CD14-positive monocyte (primary cell): ENCODE measurements at regions of chr2 and their contacts with region 1.

Region 1: DNA sequence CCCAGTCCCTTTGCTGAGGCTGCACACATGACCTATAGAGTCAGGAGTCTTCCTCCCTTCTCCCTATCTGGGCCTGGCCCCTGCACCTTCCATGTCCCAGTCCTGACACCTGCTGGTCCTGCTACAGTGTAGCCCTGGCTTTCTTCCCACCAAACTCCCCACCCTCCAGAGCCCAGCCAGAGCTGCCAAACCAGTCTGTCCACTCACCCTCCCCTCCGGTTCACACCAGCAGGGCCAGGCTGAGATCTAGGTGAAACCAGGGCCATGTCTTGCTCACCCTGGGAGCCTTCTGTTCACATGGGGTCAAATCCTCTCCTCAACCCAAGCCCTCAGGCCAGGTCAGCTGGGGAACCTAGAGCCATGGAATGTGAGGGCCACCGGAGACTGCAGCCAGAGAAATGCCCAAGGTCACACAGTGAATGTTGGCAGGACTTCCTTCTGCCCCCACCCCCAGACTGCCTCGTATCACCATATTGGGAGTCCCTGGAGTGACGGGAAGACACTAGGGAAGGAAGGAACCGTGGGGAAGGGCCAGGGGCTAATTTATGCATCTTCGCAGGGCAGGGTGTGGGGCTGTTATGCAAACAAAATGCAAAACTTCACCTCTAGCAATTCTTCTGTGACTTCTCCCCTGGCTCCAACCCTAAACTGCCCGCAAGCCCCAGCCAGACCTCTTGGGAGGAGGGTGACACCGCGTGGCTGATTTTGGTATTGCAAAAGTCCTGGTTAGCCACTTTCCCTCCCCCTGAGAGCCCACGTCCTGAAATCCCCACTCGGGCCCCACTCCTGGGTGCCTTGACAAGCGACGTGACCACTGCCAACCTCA is 14.6 kb downstream of the TNS1 start:
- DNase-seq: peak; percentile 65 to 80 (median 78)
- H3K4me3 ChIP-seq: no peak overlapping the region
- H3K4me3 Mint-ChIP-seq: no peak overlapping the region
- H3K27ac ChIP-seq: no peak overlapping the region
- H3K27ac Mint-ChIP-seq: peak overlapping the region in 1 of 7 donors; percentile 68
- H3K4me1 ChIP-seq: peaks cover under 1 to 1% of the 10 kb centered on the region in 2 donors
- H3K4me1 Mint-ChIP-seq: peaks cover 3% of the 10 kb centered on the region
- H3K27me3 ChIP-seq: no peaks in the 10 kb centered on the region
- H3K27me3 Mint-ChIP-seq: peaks cover 0 to 2% (median 0%) of the 10 kb centered on the region in 3 donors
- CTCF ChIP-seq: peak; percentile 93

Region 2: GRCh38 chr2:217886720-217887309 is 101.4 kb before region 1 on chr2:
- intact Hi-C with region 1: loop called (anchors 5 to 10 kb)
- DNase-seq: peak; percentile 49 to 66 (median 53)
- H3K4me3 ChIP-seq: peak overlapping the region in 1 of 3 experiments; percentile 3
- H3K4me3 Mint-ChIP-seq: no peak overlapping the region
- H3K27ac ChIP-seq: peak overlapping the region in 1 of 2 donors; percentile 34
- H3K27ac Mint-ChIP-seq: peak overlapping the region in 6 of 7 donors; percentile 42 to 85 (median 70)
- H3K4me1 ChIP-seq: peaks cover 18 to 22% of the 10 kb centered on the region in 2 donors
- H3K4me1 Mint-ChIP-seq: peaks cover 23% of the 10 kb centered on the region
- H3K27me3 ChIP-seq: no peaks in the 10 kb centered on the region
- H3K27me3 Mint-ChIP-seq: peaks cover 1 to 7% (median 2%) of the 10 kb centered on the region in 3 donors
- CTCF ChIP-seq: peak; percentile 78

Region 3: GRCh38 chr2:217899231-217900009 is 88.8 kb before region 1 on chr2:
- intact Hi-C with region 1: loop called in 1 of 2 experiments (anchors 10 kb)
- DNase-seq: peak; percentile 72 to 78 (median 74)
- H3K4me3 ChIP-seq: no peak overlapping the region
- H3K4me3 Mint-ChIP-seq: peak overlapping the region in 1 of 2 donors; percentile 34
- H3K27ac ChIP-seq: peak overlapping the region in 1 of 2 donors; percentile 48
- H3K27ac Mint-ChIP-seq: peak overlapping the region; percentile 42 to 87 (median 75)
- H3K4me1 ChIP-seq: peaks cover 27 to 41% of the 10 kb centered on the region in 2 donors
- H3K4me1 Mint-ChIP-seq: peaks cover 45% of the 10 kb centered on the region
- H3K27me3 ChIP-seq: no peaks in the 10 kb centered on the region
- H3K27me3 Mint-ChIP-seq: peaks cover 0 to 3% (median 2%) of the 10 kb centered on the region in 3 donors
- CTCF ChIP-seq: peak; percentile 66